ENCODE measurements at regions of chr9 and their contacts with region 1.

Region 1: DNA sequence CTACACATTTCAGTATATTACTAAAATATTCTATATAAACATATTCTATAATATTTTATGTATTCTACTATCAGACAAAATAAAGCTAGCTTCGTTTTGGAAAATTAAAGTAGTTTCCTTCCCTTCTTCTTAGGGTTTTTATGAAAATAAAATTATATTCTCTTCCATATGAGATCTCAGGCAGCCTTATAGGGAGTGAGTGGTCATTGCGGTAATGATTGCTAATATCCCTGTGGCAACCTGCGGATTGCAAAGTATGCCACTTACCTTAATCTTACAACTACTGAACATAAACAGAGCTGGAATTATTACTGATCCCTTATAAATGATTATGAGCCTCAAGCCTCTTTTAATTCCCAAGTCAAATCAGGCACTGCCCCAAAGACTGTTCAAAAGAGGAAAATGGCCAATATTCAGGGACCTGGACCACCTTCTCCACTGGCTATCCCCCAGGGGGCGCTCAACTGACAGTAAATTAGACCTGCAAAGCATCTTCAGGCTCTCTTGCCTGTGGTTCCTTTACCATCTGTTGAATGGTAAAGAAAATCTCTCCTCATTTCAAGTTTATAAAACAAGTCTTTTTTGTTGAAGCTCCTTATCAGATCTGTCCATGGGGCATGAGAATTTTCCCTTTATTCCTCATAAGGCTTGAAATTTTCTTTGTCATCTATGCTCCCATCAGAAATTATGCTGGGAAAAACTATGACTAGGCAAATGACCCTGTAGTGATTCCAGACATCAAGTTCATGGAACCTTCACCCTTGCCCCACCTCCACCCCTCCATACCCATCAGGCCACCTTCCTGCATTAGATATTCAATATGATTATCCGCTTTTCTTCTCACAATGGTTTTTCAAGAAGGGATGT is 163.9 kb downstream of the CEMIP2 start:
- DNase-seq: peak; percentile 87
- ATAC-seq: peak; percentile 97
- H3K4me3 Mint-ChIP-seq: no peak overlapping the region
- H3K27ac Mint-ChIP-seq: no peak overlapping the region
- H3K4me1 Mint-ChIP-seq: no peaks in the 10 kb centered on the region
- H3K27me3 Mint-ChIP-seq: no peaks in the 10 kb centered on the region

Region 2: DNA sequence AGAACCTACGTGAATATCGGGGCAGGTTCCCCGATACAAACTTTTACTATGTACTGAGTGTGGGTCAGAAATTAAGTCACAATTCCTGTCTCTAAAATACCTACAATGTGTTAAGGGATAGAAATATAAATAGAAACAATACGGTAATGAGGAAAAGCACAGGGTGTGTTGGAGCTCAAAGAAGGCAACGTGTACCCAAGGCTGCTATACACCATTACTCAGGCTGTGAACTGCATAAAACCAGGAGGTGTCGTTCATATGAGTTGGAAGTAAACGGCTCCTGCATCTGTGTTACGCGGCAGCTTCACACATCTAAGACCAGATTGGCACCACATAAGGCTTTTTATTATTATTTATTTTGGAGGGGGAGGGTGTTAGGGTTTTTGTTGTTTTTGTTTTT is 432.9 kb before region 1 on chr9:
- CTCF ChIA-PET with region 1: no interaction called
- DNase-seq: no peak
- ATAC-seq: no peak
- H3K4me3 Mint-ChIP-seq: no peak overlapping the region
- H3K27ac Mint-ChIP-seq: no peak overlapping the region
- H3K4me1 Mint-ChIP-seq: no peaks in the 10 kb centered on the region
- H3K27me3 Mint-ChIP-seq: no peaks in the 10 kb centered on the region

Region 3: GRCh38 chr9:71544464-71544863 is 60.0 kb before region 1 on chr9:
- CTCF ChIA-PET with region 1: no interaction called
- DNase-seq: no peak
- ATAC-seq: no peak
- H3K4me3 Mint-ChIP-seq: no peak overlapping the region
- H3K27ac Mint-ChIP-seq: no peak overlapping the region
- H3K4me1 Mint-ChIP-seq: no peaks in the 10 kb centered on the region
- H3K27me3 Mint-ChIP-seq: peaks cover 38% of the 10 kb centered on the region

Region 4: DNA sequence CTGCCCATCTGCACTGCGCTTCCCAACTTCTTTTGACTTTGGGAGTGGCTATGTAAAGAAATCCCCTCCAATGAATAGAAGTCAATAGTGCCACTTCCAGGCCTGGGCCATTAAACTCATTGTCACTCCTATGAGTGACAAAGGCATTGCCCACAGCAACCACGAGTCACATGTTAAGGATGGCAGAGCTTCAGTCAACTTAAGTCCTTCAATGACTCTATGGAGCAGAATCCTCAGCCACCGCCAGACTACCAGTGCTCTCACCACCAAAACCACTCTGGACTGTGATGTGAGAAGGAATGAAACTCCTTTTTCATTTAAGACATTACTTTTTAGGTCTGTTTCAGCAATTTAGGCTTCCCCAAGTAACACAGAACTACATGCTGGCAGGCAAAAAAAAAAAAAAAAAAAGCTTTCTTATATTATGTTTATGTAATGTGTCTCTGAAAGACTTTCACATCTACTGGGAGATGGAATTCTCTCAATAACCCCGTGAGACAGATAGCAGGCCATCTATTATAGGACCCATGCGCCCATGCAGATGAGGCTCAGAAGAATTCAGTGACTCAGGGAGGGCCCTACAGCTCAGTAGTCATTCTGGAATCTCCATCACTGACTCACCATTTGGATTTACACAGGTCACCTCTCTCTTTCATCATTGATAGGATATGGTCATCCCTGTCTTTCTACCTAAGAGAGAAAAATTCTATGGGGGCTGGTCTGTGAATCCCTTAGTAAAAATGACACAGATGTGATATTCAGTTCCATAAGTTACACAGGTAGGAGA is 16.7 kb before region 1 on chr9:
- CTCF ChIA-PET with region 1: no interaction called
- DNase-seq: peak; percentile 41
- ATAC-seq: no peak
- H3K4me3 Mint-ChIP-seq: no peak overlapping the region
- H3K27ac Mint-ChIP-seq: no peak overlapping the region
- H3K4me1 Mint-ChIP-seq: no peaks in the 10 kb centered on the region
- H3K27me3 Mint-ChIP-seq: peaks cover 4% of the 10 kb centered on the region

Region 5: DNA sequence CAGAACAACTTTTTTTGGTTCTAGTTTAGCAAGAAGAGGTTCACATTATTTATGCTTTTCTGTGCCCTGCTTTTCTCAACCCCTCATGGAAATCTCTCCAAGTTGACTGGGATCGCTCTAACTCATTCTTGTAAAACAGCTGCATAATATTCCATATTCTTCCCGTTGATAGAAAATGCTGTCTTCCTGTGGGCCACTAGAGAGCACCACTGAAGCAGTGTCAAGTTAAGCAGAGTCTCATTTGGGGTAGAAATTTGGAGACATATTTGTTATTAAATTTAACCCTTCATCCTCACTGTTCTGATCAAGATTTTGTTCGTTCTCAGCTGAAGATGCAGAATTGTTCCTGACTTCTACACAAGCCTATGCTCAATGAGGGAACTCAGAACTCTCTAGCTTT is 23.8 kb after region 1 on chr9:
- CTCF ChIA-PET with region 1: interaction called, 10 read pairs
- DNase-seq: no peak
- ATAC-seq: peak; percentile 70
- H3K4me3 Mint-ChIP-seq: no peak overlapping the region
- H3K27ac Mint-ChIP-seq: no peak overlapping the region
- H3K4me1 Mint-ChIP-seq: peaks cover 35% of the 10 kb centered on the region
- H3K27me3 Mint-ChIP-seq: peaks cover 6% of the 10 kb centered on the region

Region 6: DNA sequence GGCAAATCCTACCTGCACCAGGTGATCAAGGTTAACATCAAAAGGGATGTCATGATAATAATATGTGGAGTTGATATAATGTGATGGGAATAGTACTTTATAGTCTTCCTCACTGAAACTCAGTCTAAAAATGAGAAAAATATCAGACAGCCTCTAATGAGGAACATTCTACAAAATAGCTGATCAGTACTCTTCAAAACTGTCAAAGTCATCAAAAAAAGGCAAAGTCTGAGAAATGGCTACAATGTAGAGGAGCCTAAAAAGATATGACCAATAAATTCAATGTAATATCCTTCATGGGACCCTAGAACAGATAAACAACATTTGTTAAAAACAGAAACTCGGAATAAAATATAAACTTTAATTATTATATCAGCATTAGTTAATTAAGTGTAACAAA is 68.1 kb after region 1 on chr9:
- CTCF ChIA-PET with region 1: no interaction called
- DNase-seq: no peak
- ATAC-seq: no peak
- H3K4me3 Mint-ChIP-seq: no peak overlapping the region
- H3K27ac Mint-ChIP-seq: no peak overlapping the region
- H3K4me1 Mint-ChIP-seq: peaks cover 3% of the 10 kb centered on the region
- H3K27me3 Mint-ChIP-seq: peaks cover 9% of the 10 kb centered on the region